Psoas muscle (tissue), 8 donors: ENCODE measurements at regions of chr2 and their contacts with region 1.

Region 1: DNA sequence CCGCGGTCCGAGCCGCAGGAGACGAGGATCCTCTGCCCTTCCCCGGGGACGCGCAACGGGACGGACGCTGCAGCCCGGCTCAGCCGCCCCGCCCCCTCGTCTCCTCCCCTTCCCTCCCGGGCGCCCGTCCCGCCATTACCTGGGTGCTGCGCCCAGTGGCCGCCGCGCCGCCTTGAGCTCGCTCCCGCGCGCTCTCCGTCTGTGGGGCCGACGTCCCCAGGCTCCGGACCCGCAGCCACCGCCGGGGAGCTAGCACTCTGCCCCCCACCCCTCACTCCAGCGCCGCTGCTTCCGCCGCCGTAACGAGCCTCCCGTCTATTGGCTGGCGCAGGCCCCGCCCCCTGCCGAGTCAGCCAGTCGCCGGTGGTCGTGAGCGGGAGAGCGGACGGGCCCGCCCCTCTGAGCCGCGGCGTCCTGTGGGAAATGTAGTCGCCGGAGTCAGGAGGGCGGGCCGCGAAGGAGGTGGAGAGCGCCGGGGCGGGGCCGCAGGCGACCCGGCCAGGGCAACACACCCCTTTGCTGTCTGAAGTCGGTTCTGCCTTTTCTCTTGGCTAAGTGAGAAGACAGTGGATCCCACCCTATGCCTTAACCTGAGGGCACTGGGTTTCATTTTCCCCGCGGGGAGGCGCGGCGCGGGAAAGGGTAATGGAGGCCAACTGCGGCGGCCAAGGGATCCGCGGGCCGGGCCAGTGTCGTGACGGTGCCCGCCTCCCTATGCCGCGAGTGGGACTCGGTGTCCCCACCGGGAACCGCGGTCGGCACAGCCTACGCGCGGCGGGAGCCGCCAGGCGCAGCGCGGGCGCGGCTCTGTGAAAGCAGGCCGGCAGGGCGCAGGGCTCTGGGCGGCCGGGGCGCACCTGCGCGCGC is at the start of gene SAP130:
- DNase-seq: peak; percentile 99
- ATAC-seq: peak; percentile 92 to 94 (median 92)
- H3K4me3 ChIP-seq: peak within 1 kb of the TSS; percentile 83
- H3K27ac ChIP-seq: peak within 1 kb of the TSS; percentile 93
- H3K4me1 ChIP-seq: peaks cover 7% of the 10 kb centered on the region
- H3K27me3 ChIP-seq: no peaks in the 10 kb centered on the region
- CTCF ChIP-seq: no peak
- total RNA-seq, gene SAP130: 10.5 to 14.3 (median 13.2) TPM

Region 2: DNA sequence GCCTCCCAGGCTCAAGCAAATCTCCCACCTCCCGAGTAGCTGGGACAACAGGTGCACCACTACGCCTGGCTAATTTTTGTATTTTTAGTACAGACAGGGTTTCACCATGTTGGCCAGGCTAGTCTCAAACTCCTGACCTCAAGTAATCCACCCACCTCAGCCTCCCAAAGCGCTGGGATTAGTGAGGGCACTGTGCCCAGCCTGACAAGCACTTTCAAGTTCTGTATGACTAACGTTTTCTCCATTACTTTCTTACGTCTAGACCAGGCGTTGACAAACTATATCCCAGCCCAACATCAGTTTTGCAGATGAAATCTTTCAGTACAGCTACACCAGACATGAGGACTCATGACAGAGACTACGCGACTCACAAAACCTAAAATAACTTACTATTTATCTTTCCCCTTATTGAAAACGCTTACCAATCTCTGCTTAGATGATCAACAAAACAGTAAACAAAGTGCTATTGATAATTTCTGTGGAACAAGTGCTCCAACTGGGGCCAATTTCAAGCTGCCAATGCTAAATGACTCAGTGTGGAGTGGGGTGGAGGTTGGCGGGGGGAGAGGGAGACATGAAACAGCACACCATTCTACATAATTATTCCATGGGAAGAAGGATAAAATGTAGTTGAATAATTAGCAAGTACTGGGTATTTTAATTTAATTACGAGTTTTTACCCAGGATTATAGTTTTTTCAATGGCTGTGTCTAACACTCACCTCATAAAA is 59.3 kb before region 1 on chr2:
- intact Hi-C with region 1: loop called in 1 of 2 experiments (anchors 5 kb)
- DNase-seq: peak; percentile 84 to 91
- ATAC-seq: peak; percentile 96 to 98 (median 98)
- H3K4me3 ChIP-seq: peak overlapping the region; percentile 10
- H3K27ac ChIP-seq: peak overlapping the region; percentile 93
- H3K4me1 ChIP-seq: peaks cover 11% of the 10 kb centered on the region
- H3K27me3 ChIP-seq: no peaks in the 10 kb centered on the region
- CTCF ChIP-seq: no peak

Region 3: GRCh38 chr2:128062571-128062970 is 34.5 kb after region 1 on chr2:
- intact Hi-C with region 1: no loop called
- DNase-seq: no peak
- ATAC-seq: no peak
- H3K4me3 ChIP-seq: no peak overlapping the region
- H3K27ac ChIP-seq: no peak overlapping the region
- H3K4me1 ChIP-seq: no peaks in the 10 kb centered on the region
- H3K27me3 ChIP-seq: no peaks in the 10 kb centered on the region
- CTCF ChIP-seq: no peak

Region 4: GRCh38 chr2:128084757-128085156 is 56.7 kb after region 1 on chr2:
- intact Hi-C with region 1: loop called in 1 of 2 experiments (anchors 2 kb)
- DNase-seq: no peak
- ATAC-seq: no peak
- H3K4me3 ChIP-seq: no peak overlapping the region
- H3K27ac ChIP-seq: no peak overlapping the region
- H3K4me1 ChIP-seq: no peaks in the 10 kb centered on the region
- H3K27me3 ChIP-seq: no peaks in the 10 kb centered on the region
- CTCF ChIP-seq: no peak

Region 5: GRCh38 chr2:128090945-128091725 is 63.1 kb after region 1 on chr2 and contains the start of gene UGGT1:
- intact Hi-C with region 1: loop called in 1 of 2 experiments (anchors 2 kb)
- DNase-seq: peak; percentile 94 to 98
- ATAC-seq: peak; percentile 99
- H3K4me3 ChIP-seq: peak within 1 kb of the TSS; percentile 96
- H3K27ac ChIP-seq: peak within 1 kb of the TSS; percentile 86
- H3K4me1 ChIP-seq: peaks cover 17% of the 10 kb centered on the region
- H3K27me3 ChIP-seq: no peaks in the 10 kb centered on the region
- CTCF ChIP-seq: no peak
- total RNA-seq, gene UGGT1: 31.2 to 41.7 (median 37.7) TPM